ENCODE measurements at regions of chr14 and their contacts with region 1.

Region 1: GRCh38 chr14:99628832-99629618 is 15.9 kb upstream of the HHIPL1 start:
- DNase-seq: peak; percentile 37
- H3K4me3 Mint-ChIP-seq: no peak overlapping the region
- H3K27ac Mint-ChIP-seq: no peak overlapping the region
- H3K4me1 Mint-ChIP-seq: peaks cover 2% of the 10 kb centered on the region
- H3K27me3 Mint-ChIP-seq: no peaks in the 10 kb centered on the region

Region 2: GRCh38 chr14:99518441-99519346 is 110.3 kb before region 1 on chr14:
- intact Hi-C with region 1: loop called (anchors 1 kb)
- DNase-seq: peak; percentile 70
- H3K4me3 Mint-ChIP-seq: no peak overlapping the region
- H3K27ac Mint-ChIP-seq: no peak overlapping the region
- H3K4me1 Mint-ChIP-seq: no peaks in the 10 kb centered on the region
- H3K27me3 Mint-ChIP-seq: no peaks in the 10 kb centered on the region

Region 3: DNA sequence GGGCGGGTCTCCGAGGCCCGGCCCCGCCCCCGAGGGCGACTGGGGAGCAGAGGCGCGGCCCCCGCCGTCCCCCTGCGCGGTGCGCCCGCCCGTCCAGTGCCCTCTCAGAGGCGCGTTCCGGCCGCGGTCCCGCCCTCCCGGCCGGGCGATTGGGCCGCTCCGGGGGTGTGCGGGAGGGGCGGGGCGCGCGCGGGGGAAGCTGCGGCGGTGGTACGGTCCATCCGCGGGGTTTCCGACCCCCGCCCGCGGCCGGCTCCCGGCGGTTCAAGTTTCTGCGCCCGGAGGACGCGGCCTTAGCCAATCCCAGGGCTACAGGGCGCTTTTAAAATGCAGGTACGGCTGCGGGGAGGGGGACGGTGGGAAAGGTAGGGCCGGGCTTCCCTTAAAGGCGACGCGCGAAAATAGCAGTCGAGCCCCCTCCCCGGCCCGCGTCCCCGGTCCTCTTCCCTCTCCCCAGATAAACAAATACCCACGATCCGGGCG is 24.7 kb before region 1 on chr14:
- intact Hi-C with region 1: no loop called
- DNase-seq: peak; percentile 93
- H3K4me3 Mint-ChIP-seq: peak overlapping the region; percentile 86
- H3K27ac Mint-ChIP-seq: peak overlapping the region; percentile 87
- H3K4me1 Mint-ChIP-seq: peaks cover 18% of the 10 kb centered on the region
- H3K27me3 Mint-ChIP-seq: peaks cover 6% of the 10 kb centered on the region

Region 4: GRCh38 chr14:99995700-99996356 is 366.8 kb after region 1 on chr14:
- intact Hi-C with region 1: no loop called
- DNase-seq: peak; percentile 47
- H3K4me3 Mint-ChIP-seq: no peak overlapping the region
- H3K27ac Mint-ChIP-seq: no peak overlapping the region
- H3K4me1 Mint-ChIP-seq: peaks cover 8% of the 10 kb centered on the region
- H3K27me3 Mint-ChIP-seq: peaks cover 27% of the 10 kb centered on the region

Region 5: DNA sequence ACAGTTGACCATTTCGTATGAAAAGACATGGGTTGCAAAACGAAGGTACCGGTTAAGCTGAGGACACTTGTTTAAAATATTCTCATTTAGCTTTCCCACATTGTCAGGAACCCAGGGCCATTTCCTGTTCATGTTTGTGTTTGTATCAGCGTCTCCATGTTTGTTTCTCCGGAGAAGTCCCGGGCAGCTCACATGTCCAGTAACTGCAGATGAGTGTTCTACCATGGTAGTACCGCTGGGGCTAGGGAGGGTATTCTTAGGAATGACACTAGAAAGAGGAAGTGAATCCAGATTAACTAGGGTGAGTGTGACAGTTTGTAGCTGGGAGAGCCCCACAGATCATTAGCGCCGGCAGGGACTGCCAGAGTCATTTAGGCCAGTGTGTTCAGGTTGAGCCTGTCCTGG is 386.2 kb after region 1 on chr14:
- intact Hi-C with region 1: no loop called
- DNase-seq: no peak
- H3K4me3 Mint-ChIP-seq: no peak overlapping the region
- H3K27ac Mint-ChIP-seq: no peak overlapping the region
- H3K4me1 Mint-ChIP-seq: peaks cover 6% of the 10 kb centered on the region
- H3K27me3 Mint-ChIP-seq: peaks cover 6% of the 10 kb centered on the region